Tibial artery (tissue), 4 donors: ENCODE measurements at regions of chrX and their contacts with region 1.

Region 1: DNA sequence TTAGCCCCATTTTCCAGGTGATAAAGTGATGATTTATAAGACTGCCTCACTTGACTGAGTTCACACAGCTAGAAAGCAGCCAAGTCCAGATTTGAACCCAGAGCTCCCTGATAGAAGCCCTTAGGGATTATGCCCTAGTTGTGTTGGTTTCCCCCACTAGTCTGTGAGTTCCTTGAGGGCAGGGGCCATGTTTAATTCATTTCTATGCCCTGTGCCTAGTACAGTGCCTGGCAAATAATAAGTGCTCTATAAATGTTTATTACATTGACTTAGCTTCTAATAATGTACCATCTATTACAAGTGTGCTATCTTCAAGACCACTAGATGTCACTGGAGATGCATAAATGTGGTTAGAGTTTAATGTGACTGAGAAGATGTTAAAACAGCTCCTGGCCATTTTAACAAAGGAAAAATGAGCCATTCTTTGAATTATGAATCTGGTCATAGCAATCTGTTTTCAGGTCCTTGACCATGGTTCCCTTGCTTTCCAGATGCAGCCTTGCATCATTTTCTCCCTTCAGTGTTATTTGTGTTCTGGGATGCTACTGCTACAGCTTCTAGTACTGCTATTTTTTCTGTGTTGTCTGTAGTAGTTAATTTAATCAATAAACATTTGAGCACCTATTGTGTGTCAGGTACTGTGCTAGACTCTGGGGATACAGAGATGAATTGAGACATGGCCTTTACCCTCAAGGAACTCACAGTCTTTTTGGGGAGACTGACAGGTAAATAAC is 43.2 kb downstream of the SLC9A6 start:
- DNase-seq: no peak
- H3K4me3 ChIP-seq: no peak overlapping the region
- H3K27ac ChIP-seq: peak overlapping the region; percentile 81 to 85
- H3K4me1 ChIP-seq: peaks cover 0 to 45% (median 8%) of the 10 kb centered on the region in 4 donors
- H3K27me3 ChIP-seq: no peaks in the 10 kb centered on the region
- CTCF ChIP-seq: peak; percentile 49 to 68

Region 2: DNA sequence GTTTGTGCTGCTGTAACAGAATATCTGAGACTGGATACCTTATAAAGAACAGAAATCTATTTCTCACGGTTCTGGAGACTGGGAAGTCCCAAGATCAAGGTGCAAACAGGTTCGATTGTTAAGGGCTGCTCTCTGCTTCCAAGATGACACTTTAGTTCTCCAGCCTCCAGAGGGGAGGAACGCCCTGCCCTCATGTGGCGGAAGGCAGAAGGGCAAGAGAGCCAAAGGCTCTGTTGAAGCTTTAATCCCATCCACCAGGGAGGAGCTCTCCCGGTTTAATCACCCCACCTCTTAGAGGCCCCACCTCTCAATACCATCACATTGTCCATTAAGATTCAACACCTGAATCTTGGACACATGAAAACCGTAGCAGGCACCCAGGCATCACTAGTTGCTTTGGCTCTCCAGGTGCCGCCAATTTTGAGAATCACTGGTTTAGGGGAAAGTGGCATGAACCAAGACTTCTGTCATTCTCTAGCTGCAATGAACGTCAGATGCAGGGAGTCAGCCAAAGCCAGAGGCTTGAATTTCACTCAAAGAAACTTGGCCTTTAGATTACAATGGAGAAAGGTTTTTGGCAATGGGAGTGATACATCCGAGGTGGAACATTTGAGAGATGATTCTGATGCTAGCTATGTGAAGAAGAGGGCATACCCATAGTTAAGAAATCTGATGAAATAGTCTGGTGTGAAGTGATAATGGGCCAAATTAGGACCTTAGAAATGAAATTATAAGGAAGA is 134.6 kb after region 1 on chrX:
- intact Hi-C with region 1: loop called (anchors 5 kb)
- DNase-seq: peak in 1 of 2 donors; percentile 73
- H3K4me3 ChIP-seq: no peak overlapping the region
- H3K27ac ChIP-seq: peak overlapping the region; percentile 69 to 98
- H3K4me1 ChIP-seq: peaks cover 0 to 93% (median 7%) of the 10 kb centered on the region in 4 donors
- H3K27me3 ChIP-seq: no peaks in the 10 kb centered on the region
- CTCF ChIP-seq: peak; percentile 52 to 59

Region 3: DNA sequence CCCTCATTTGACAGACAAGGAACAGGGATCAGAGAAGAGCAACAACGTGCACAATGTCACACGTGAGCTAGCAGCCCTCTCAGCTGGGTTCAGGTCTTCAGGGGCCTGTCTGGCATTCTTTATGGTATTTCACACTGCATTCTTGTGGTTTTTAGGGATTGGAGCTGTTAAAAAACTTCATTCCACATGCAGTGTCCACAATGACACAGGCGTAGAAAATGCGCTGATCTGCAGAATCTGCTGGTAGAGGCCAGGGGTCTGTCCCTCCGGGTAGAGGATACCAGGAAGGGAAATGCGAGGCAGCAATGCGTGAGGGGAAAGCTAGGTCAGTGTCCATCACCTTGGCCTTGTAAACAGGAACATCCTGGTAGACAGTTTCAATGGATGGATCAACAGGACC is 186.1 kb after region 1 on chrX:
- intact Hi-C with region 1: loop called (anchors 5 kb)
- DNase-seq: no peak
- H3K4me3 ChIP-seq: no peak overlapping the region
- H3K27ac ChIP-seq: peak overlapping the region; percentile 54 to 81
- H3K4me1 ChIP-seq: peaks cover 0 to 44% (median 3%) of the 10 kb centered on the region in 4 donors
- H3K27me3 ChIP-seq: no peaks in the 10 kb centered on the region
- CTCF ChIP-seq: no peak